Dorsolateral prefrontal cortex (tissue), 120 donors: ENCODE measurements at regions of chr3 and their contacts with region 1.

Region 1: DNA sequence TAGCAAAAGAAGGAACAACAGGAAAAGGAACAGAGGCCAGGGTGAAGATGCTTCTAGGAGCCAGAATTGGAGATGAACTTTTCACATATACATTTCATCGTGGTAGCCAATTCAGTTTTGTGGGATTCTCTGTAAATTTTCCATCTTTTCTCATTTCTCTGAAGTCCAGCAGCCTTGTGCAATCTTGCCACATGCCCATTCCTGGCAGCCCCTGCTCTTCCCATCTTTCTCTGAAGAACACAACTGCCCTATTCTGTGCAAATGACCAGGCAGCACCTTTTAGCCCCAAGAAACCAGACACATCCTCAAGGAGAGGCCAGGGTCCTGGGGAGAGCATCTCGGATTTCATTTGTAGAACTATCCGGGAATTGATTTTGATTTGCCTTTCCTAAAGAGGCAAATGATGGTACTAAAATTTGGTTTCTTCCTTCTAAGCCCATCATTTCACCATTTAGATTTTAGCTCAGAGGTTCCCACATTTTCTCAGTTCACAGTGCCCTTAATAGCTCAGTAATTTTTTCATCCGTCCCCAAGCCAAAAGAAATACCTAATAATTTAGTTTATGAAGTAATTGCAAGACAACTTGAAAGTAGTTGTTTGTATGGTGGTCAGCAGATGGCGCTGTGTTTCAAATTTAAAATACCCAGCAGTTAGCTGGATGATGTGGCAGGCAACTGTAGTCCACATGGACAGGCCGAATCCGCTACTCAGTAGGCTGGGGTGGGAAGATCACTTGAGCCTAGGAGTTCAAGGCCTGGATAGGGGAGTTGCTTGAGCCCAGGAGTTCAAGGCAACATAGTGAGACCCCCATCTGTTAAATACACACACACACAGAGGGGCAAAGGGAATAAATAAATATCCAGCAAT is 61.3 kb upstream of the ACKR4 start:
- DNase-seq: peak in 7 of 10 donors; percentile 37 to 75 (median 45)
- H3K4me3 ChIP-seq: no peak overlapping the region
- H3K27ac ChIP-seq: peak overlapping the region in 2 of 59 donors; percentile 2 to 56
- H3K27me3 ChIP-seq: no peaks in the 10 kb centered on the region
- CTCF ChIP-seq: peak; percentile 56 to 89 (median 77)

Region 2: GRCh38 chr3:132641837-132642538 is 106.2 kb after region 1 on chr3:
- intact Hi-C with region 1: loop called (anchors 2 to 5 kb)
- DNase-seq: no peak
- H3K4me3 ChIP-seq: no peak overlapping the region
- H3K27ac ChIP-seq: no peak overlapping the region
- H3K27me3 ChIP-seq: no peaks in the 10 kb centered on the region
- CTCF ChIP-seq: peak; percentile 66 to 93 (median 80)